ENCODE measurements at regions of chr3 and their contacts with region 1.

Region 1: DNA sequence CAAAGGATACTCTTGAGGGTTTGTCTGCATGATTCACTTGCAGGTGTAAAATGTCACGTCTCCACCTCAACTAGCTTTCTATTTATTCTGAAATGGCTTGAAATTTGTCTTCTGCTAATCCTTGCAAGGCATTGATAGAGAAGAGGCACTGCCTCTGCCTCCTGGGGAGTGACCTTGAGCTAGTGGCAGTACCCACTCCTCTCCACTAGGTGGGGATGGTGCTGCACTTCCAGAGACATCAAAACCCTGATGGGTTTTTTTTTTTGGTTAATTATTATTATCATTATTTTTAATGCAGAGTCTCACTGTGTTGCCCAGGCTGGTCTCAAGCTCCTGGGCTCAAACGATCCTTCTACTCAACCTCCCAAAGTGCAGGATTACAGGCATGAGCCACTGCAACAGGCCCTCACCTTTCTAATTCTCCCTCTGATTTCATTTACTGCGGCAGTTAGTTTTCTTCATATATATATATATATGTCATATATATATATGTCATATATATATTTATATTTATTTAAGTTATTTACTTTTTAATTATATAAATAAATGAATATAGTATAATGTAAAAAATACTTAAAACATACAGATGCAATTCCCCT is 117.6 kb upstream of the EIF1B start:
- DNase-seq: peak; percentile 26 to 67 (median 40)
- H3K4me3 ChIP-seq: no peak overlapping the region
- H3K4me3 Mint-ChIP-seq: no peak overlapping the region
- H3K27ac ChIP-seq: no peak overlapping the region
- H3K27ac Mint-ChIP-seq: peak overlapping the region in 1 of 8 donors; percentile 7
- H3K4me1 ChIP-seq: no peaks in the 10 kb centered on the region
- H3K4me1 Mint-ChIP-seq: no peaks in the 10 kb centered on the region
- H3K27me3 ChIP-seq: no peaks in the 10 kb centered on the region
- H3K27me3 Mint-ChIP-seq: no peaks in the 10 kb centered on the region

Region 2: DNA sequence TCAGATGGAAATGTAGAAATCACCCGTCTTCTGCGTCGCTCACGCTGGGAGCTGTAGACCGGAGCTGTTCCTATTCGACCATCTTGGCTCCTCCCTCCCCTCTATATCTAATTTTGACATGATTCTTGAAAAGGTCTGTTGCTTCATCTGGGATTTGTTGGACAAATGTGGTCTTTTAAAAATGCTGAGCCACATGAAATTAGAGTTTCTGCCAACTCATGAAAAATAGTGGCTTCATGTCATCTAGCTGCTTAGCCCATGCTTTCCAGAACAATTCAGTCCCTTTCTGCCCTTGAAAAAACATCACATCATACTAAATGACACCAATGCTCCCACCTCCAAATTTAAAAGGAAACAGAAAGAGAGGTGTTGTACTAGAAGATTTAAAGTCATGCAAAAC is 31.0 kb before region 1 on chr3:
- CTCF ChIA-PET with region 1: no interaction called
- POLR2A ChIA-PET with region 1: no interaction called
- DNase-seq: no peak
- H3K4me3 ChIP-seq: no peak overlapping the region
- H3K4me3 Mint-ChIP-seq: no peak overlapping the region
- H3K27ac ChIP-seq: no peak overlapping the region
- H3K27ac Mint-ChIP-seq: no peak overlapping the region
- H3K4me1 ChIP-seq: no peaks in the 10 kb centered on the region
- H3K4me1 Mint-ChIP-seq: no peaks in the 10 kb centered on the region
- H3K27me3 ChIP-seq: no peaks in the 10 kb centered on the region
- H3K27me3 Mint-ChIP-seq: peaks cover 2 to 9% of the 10 kb centered on the region in 2 donors

Region 3: GRCh38 chr3:40179016-40179415 is 12.9 kb before region 1 on chr3:
- CTCF ChIA-PET with region 1: interaction called, 15 read pairs
- POLR2A ChIA-PET with region 1: no interaction called
- DNase-seq: peak in 4 of 5 donors; percentile 19 to 60 (median 20)
- H3K4me3 ChIP-seq: no peak overlapping the region
- H3K4me3 Mint-ChIP-seq: no peak overlapping the region
- H3K27ac ChIP-seq: no peak overlapping the region
- H3K27ac Mint-ChIP-seq: no peak overlapping the region
- H3K4me1 ChIP-seq: no peaks in the 10 kb centered on the region
- H3K4me1 Mint-ChIP-seq: no peaks in the 10 kb centered on the region
- H3K27me3 ChIP-seq: no peaks in the 10 kb centered on the region
- H3K27me3 Mint-ChIP-seq: peaks cover 0 to 6% of the 10 kb centered on the region in 2 donors

Region 4: GRCh38 chr3:40207796-40208195 is 15.8 kb after region 1 on chr3:
- CTCF ChIA-PET with region 1: no interaction called
- POLR2A ChIA-PET with region 1: no interaction called
- DNase-seq: no peak
- H3K4me3 ChIP-seq: no peak overlapping the region
- H3K4me3 Mint-ChIP-seq: no peak overlapping the region
- H3K27ac ChIP-seq: no peak overlapping the region
- H3K27ac Mint-ChIP-seq: no peak overlapping the region
- H3K4me1 ChIP-seq: no peaks in the 10 kb centered on the region
- H3K4me1 Mint-ChIP-seq: no peaks in the 10 kb centered on the region
- H3K27me3 ChIP-seq: no peaks in the 10 kb centered on the region
- H3K27me3 Mint-ChIP-seq: no peaks in the 10 kb centered on the region

Region 5: DNA sequence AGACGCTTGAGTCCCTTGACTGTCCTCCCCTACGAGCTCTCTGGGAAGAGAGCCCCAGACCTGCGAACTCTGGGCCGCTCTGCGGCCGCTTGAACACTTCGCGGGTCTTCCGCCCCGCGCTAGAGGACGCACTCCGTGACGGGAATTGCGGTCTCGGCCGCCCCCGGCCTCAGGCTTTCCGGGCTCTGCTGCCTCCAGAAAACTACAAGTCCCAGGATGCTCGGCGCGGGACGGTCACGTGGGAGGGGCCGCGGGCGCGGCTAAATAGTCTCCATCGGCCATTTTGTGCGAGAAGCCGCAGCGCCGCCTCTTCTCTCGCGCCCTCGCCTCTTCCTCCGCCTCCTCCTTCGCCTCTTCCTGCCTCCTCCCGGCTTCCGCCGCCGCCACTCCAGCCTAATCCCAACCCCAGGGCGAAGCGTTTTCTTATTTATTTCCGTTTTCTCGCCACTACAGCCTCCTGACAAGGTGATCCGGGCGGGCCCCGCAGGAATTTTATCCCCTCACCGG is 117.5 kb after region 1 on chr3 and contains the start of gene EIF1B:
- CTCF ChIA-PET with region 1: interaction called, 96 read pairs
- POLR2A ChIA-PET with region 1: interaction called, 3 read pairs
- DNase-seq: peak; percentile 98 to 99 (median 98)
- H3K4me3 ChIP-seq: peak within 1 kb of the TSS; percentile 69
- H3K4me3 Mint-ChIP-seq: peak within 1 kb of the TSS; percentile 99 to 100 (median 100)
- H3K27ac ChIP-seq: peak within 1 kb of the TSS; percentile 96
- H3K27ac Mint-ChIP-seq: peak within 1 kb of the TSS; percentile 97 to 100 (median 99)
- H3K4me1 ChIP-seq: peaks cover 18% of the 10 kb centered on the region
- H3K4me1 Mint-ChIP-seq: peaks cover 35 to 46% (median 38%) of the 10 kb centered on the region in 3 donors
- H3K27me3 ChIP-seq: no peaks in the 10 kb centered on the region
- H3K27me3 Mint-ChIP-seq: no peaks in the 10 kb centered on the region
- total RNA-seq, gene EIF1B: 76.4 to 81.4 TPM